ENCODE measurements at regions of chr15 and their contacts with region 1.

Region 1: GRCh38 chr15:74433592-74434262 is at the start of gene SEMA7A:
- DNase-seq: peak; percentile 60 to 95
- H3K4me3 ChIP-seq: peak within 1 kb of the TSS; percentile 68
- CTCF ChIP-seq: no peak
- POLR2A ChIP-seq: no peak
- total RNA-seq, gene SEMA7A: 16.7 to 30.5 (median 20.5) TPM

Region 2: GRCh38 chr15:74382004-74382816 is 51.5 kb before region 1 on chr15:
- intact Hi-C with region 1: loop called (anchors 10 kb)
- DNase-seq: peak; percentile 65 to 97
- H3K4me3 ChIP-seq: no peak overlapping the region
- CTCF ChIP-seq: peak in 1 of 3 donors; percentile 91
- POLR2A ChIP-seq: no peak